H1 (cell line): ENCODE measurements at regions of chr4 and their contacts with region 1.

Region 1: DNA sequence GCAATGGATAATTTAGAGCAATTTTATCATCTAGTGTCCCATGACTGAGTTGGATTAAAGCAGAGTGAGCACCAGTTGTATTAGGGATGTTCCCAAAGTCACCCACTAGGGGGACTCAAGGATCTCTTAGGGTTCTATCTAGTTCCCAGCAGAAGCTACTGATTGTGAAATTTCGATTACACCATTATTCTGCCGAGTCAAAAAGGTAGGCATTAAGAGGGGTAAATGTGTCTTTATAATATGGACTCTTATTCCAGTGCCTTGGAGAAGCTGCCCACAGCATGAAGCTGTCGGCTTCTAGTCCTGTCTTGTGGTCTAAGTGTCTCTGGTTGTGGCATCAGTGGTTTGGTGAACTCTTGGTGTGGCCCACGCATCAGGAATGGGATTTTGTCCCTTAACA is 53.3 kb downstream of the RGS12 start:
- DNase-seq: no peak
- H3K4me3 ChIP-seq: no peak overlapping the region
- H3K27ac ChIP-seq: no peak overlapping the region
- H3K4me1 ChIP-seq: peaks cover 3 to 10% (median 5%) of the 10 kb centered on the region in 4 experiments; a peak in 5 of 7 replicates
- H3K27me3 ChIP-seq: no peaks in the 10 kb centered on the region
- CTCF ChIP-seq: peak in 2 of 3 experiments; percentile 76 to 78; a peak in 3 of 4 replicates
- EP300 ChIP-seq: no peak
- POLR2A ChIP-seq: no peak
- RAD21 ChIP-seq: peak; percentile 90 to 91

Region 2: DNA sequence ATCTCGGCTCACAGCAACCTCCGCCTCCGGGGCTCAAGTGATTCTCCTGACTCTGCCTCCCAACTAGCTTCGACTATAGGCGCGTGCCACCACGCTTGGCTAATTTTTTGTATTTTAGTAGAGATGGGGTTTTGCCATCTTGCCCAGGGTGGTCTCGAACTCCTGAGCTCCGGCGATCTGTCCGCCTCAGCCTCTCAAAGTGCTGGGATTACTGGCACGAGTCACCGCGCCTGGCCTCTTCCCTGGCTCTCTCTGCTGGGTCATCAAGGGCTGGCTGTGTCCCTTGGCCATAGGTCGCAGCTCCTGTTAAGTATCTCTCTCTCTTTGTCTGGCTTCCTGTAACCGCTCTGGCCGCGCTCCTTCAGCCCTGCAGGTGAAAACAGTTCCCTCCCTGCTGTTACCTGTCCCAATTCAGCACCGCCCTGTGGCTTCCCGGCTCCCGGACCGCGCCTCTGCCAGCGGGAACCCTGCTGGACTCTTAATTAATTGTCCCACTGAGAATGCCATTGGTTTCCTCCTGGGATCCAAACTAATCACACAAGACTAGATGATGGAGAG is 54.7 kb before region 1 on chr4:
- CTCF ChIA-PET with region 1: no interaction called
- POLR2A ChIA-PET with region 1: no interaction called
- DNase-seq: peak in 1 of 2 experiments; percentile 65
- H3K4me3 ChIP-seq: peak overlapping the region; percentile 37 to 72 (median 66)
- H3K27ac ChIP-seq: no peak overlapping the region
- H3K4me1 ChIP-seq: peaks cover 0 to 23% (median 11%) of the 10 kb centered on the region in 4 experiments; a peak in 5 of 7 replicates
- H3K27me3 ChIP-seq: peaks cover 0 to 12% (median 1%) of the 10 kb centered on the region in 4 experiments; a peak in 3 of 7 replicates
- CTCF ChIP-seq: no peak
- EP300 ChIP-seq: no peak
- POLR2A ChIP-seq: no peak
- RAD21 ChIP-seq: no peak

Region 3: DNA sequence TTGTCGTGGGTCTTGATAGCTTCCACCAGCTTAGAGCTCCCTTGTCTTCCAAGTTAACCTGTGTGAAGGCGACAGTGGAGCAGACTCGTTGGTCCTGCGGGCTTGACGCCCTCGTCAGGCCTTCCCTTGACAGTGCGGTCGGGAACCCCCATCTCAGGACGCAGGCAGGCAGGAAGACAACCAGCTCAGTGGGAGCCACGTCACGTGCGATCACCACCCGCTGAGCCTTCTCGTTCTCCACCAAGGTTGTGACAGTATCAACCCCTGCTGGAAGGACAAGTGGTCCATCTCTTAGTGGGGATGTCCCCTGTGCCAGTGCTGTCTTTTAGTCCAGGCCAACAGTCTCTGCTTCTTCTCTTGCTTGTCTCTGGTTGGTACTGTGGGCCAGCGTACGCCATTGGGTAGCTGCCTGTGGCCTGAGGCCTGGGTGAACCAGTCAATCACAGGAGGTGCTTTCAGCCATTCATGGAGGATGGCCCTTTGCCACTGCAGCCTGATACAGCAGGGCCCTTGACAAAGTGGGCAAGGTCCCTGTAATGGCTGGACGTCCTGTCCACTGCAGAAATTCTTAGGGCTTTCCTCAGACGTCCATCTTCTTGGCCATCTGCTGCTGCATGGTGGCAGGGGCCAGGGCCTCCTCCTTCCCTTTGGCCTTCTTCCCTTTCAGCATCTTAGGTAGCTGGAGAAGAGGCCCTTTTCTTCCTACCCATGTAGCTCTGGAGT is 21.9 kb before region 1 on chr4:
- CTCF ChIA-PET with region 1: interaction called, 19 read pairs
- POLR2A ChIA-PET with region 1: no interaction called
- DNase-seq: peak; percentile 49 to 80
- H3K4me3 ChIP-seq: no peak overlapping the region
- H3K27ac ChIP-seq: no peak overlapping the region
- H3K4me1 ChIP-seq: peaks cover 0 to 8% (median 5%) of the 10 kb centered on the region in 4 experiments; a peak in 3 of 7 replicates
- H3K27me3 ChIP-seq: no peaks in the 10 kb centered on the region
- CTCF ChIP-seq: peak in 2 of 3 experiments; percentile 61 to 89; a peak in 3 of 4 replicates
- EP300 ChIP-seq: no peak
- POLR2A ChIP-seq: no peak
- RAD21 ChIP-seq: peak; percentile 69 to 77

Region 4: DNA sequence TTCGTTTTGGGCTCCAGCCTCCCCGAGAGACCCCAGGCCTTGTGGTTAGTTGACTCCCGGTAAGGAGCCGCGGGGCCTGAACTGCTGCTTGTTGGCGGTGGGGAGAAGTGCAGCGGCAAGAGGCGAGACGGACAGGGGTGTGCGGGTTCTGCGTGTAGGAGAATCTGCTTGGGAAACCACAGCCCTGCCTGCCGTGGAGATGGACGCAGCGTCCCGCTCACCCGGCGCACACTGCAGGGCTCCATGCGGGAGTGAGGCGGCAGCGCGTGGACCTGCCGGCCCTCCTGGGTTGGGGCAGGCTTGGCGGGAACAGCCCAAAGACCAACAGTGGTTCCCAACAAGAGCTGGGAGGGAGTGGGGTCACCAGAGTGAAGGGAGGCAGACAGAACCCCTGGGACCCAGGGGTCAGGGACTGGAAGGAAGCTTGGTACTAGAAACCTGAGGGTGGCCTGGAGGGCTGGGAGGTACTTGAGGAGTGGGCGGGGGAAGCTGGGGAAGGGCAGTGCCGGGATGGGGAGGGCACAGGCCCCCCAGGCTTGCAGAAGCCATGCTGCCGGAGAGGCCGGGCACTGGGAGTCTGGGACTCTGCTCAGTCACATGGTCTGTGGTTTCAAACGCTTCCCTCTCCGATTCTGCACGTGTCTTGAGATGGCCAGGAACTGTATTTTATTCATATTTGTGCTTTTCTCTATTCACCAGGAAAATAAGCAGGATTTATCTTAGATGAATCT is 17.4 kb after region 1 on chr4:
- CTCF ChIA-PET with region 1: interaction called, 41 read pairs
- POLR2A ChIA-PET with region 1: interaction called, 3 read pairs
- DNase-seq: peak in 1 of 2 experiments; percentile 48
- H3K4me3 ChIP-seq: no peak overlapping the region
- H3K27ac ChIP-seq: no peak overlapping the region
- H3K4me1 ChIP-seq: peaks cover 0 to 7% (median 3%) of the 10 kb centered on the region in 4 experiments; a peak in 4 of 7 replicates
- H3K27me3 ChIP-seq: peaks cover 0 to 2% (median 0%) of the 10 kb centered on the region in 4 experiments; a peak in 3 of 7 replicates
- CTCF ChIP-seq: no peak
- EP300 ChIP-seq: no peak
- POLR2A ChIP-seq: no peak
- RAD21 ChIP-seq: no peak

Region 5: GRCh38 chr4:3382251-3382650 is 36.1 kb after region 1 on chr4:
- CTCF ChIA-PET with region 1: no interaction called
- POLR2A ChIA-PET with region 1: no interaction called
- DNase-seq: no peak
- H3K4me3 ChIP-seq: no peak overlapping the region
- H3K27ac ChIP-seq: no peak overlapping the region
- H3K4me1 ChIP-seq: peaks cover 0 to 9% (median 4%) of the 10 kb centered on the region in 4 experiments; a peak in 3 of 7 replicates
- H3K27me3 ChIP-seq: no peaks in the 10 kb centered on the region; a peak in 1 of 7 replicates
- CTCF ChIP-seq: no peak
- EP300 ChIP-seq: no peak
- POLR2A ChIP-seq: no peak
- RAD21 ChIP-seq: no peak

Region 6: DNA sequence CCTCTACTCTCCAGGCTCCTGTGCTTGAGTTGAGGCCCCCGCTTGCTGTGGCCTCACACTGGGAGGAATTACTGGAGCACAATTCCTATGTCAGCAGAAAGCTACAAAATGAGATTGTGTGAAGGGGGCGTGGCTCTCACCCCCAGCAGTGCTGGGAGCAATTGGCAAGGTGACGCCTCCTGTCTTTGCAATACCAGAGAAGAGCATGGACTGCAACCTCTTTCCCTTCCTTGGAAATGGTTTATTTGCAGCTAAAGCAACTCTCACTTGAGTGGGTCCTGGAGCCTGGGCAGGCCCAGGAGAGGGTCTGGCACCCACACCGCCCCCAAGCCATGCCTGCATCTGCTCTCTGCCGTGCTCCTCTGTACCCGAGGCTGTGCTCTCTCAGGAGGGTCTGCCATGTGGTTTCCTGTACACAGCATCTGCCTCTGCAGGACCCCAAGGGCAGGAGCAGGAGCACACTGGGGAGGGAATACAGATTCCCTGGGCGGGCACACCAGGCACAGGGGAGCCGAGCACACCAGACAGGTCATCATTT is 62.7 kb after region 1 on chr4:
- CTCF ChIA-PET with region 1: interaction called, 23 read pairs
- POLR2A ChIA-PET with region 1: no interaction called
- DNase-seq: no peak
- H3K4me3 ChIP-seq: no peak overlapping the region
- H3K27ac ChIP-seq: no peak overlapping the region
- H3K4me1 ChIP-seq: no peaks in the 10 kb centered on the region; a peak in 3 of 7 replicates
- H3K27me3 ChIP-seq: no peaks in the 10 kb centered on the region
- CTCF ChIP-seq: no peak
- EP300 ChIP-seq: no peak
- POLR2A ChIP-seq: no peak
- RAD21 ChIP-seq: no peak

Region 7: DNA sequence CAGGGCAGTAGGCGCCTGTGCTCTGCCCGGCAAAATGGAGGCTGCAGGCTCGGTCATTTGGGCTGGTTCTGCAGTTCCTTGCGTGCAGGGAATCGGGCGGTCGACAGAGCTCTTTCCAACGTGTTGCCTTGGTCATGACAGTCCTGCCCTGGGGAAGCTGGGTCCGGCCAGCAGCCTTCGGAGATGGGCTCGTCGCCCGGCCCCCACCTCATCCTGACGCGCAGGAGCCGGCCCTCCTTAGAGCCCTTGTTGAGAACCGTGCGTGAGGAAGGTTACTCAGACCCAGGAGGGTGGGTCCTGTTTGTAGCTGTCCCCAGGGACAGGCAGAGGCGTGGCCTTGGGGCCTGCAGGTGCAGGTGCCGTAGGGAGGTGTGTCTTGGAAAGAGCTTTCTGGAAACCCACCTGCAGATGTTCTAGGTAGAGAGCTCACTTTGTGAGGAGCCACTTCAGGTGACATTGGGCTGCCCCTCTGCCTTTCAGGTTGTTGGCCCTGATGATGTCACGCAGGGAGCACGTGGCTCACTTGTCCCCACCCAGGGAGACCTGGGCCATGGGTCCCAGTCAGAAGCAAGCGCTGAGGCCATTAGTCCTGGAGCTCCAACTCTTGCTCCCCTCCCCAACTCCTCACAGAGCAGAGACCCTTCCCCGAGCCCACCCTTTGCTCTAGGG is 80.5 kb after region 1 on chr4:
- CTCF ChIA-PET with region 1: interaction called, 11 read pairs
- POLR2A ChIA-PET with region 1: interaction called, 3 read pairs
- DNase-seq: no peak
- H3K4me3 ChIP-seq: no peak overlapping the region
- H3K27ac ChIP-seq: no peak overlapping the region
- H3K4me1 ChIP-seq: no peaks in the 10 kb centered on the region; a peak in 1 of 7 replicates
- H3K27me3 ChIP-seq: no peaks in the 10 kb centered on the region; a peak in 1 of 7 replicates
- CTCF ChIP-seq: no peak
- EP300 ChIP-seq: no peak
- POLR2A ChIP-seq: no peak
- RAD21 ChIP-seq: no peak

Region 8: GRCh38 chr4:3452376-3452775 is 106.2 kb after region 1 on chr4:
- CTCF ChIA-PET with region 1: interaction called, 13 read pairs
- POLR2A ChIA-PET with region 1: no interaction called
- DNase-seq: no peak
- H3K4me3 ChIP-seq: no peak overlapping the region
- H3K27ac ChIP-seq: no peak overlapping the region
- H3K4me1 ChIP-seq: no peaks in the 10 kb centered on the region; a peak in 1 of 7 replicates
- H3K27me3 ChIP-seq: peaks cover 0 to 3% (median 0%) of the 10 kb centered on the region in 4 experiments; a peak in 5 of 7 replicates
- CTCF ChIP-seq: peak in 2 of 3 experiments; percentile 74 to 88; a peak in 3 of 4 replicates
- EP300 ChIP-seq: no peak
- POLR2A ChIP-seq: no peak
- RAD21 ChIP-seq: peak; percentile 35 to 49; a peak in 3 of 4 replicates